ENCODE measurements at regions of chr17 and their contacts with region 1.

Region 1: DNA sequence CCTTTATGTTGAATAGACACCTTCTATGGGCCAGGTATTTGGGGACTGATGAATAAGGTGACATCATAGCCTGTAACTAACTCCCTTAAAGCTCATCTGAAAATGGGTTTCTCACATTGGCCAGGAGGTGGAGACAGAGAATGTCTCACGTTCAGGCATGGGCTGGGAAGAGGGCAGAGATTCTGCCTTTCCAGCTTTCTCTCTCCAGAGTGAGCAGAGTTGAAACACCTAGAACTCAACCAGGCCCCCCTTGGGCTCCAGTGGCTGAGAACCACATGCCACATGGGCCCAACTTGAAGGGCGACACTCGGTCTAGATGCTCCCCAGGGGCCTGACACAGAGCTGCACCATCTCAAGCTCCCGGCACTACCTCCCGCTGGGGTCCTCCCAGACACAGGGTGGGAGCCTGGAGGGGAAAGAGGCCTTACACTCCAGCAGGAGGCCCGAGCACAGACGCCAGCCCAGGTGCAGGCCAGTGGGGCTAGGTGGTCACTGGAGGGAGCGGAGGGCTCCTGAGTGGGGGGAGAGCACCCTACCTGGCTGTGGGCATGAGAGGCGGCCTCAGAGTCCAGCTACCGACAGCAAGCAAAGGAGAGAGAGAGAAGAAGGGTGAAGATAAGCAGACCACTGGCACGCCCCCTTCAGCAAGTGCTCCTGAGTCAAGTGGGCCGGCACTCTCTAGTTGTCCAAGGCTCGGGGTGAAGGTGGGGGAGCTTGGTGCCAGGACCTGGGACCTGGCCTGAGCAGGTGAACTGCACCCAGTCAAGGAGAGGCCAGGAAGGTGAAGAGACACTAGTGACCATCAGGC is 55.9 kb downstream of the MYO18A start:
- DNase-seq: peak; percentile 61
- ATAC-seq: peak; percentile 98
- H3K4me3 Mint-ChIP-seq: no peak overlapping the region
- H3K27ac Mint-ChIP-seq: no peak overlapping the region
- H3K4me1 Mint-ChIP-seq: peaks cover 3% of the 10 kb centered on the region
- H3K27me3 Mint-ChIP-seq: no peaks in the 10 kb centered on the region

Region 2: GRCh38 chr17:28937044-28937729 is 187.1 kb before region 1 on chr17:
- CTCF ChIA-PET with region 1: no interaction called
- POLR2A ChIA-PET with region 1: no interaction called
- intact Hi-C with region 1: no loop called
- DNase-seq: no peak
- ATAC-seq: no peak
- H3K4me3 Mint-ChIP-seq: no peak overlapping the region
- H3K27ac Mint-ChIP-seq: no peak overlapping the region
- H3K4me1 Mint-ChIP-seq: peaks cover 76% of the 10 kb centered on the region
- H3K27me3 Mint-ChIP-seq: no peaks in the 10 kb centered on the region

Region 3: DNA sequence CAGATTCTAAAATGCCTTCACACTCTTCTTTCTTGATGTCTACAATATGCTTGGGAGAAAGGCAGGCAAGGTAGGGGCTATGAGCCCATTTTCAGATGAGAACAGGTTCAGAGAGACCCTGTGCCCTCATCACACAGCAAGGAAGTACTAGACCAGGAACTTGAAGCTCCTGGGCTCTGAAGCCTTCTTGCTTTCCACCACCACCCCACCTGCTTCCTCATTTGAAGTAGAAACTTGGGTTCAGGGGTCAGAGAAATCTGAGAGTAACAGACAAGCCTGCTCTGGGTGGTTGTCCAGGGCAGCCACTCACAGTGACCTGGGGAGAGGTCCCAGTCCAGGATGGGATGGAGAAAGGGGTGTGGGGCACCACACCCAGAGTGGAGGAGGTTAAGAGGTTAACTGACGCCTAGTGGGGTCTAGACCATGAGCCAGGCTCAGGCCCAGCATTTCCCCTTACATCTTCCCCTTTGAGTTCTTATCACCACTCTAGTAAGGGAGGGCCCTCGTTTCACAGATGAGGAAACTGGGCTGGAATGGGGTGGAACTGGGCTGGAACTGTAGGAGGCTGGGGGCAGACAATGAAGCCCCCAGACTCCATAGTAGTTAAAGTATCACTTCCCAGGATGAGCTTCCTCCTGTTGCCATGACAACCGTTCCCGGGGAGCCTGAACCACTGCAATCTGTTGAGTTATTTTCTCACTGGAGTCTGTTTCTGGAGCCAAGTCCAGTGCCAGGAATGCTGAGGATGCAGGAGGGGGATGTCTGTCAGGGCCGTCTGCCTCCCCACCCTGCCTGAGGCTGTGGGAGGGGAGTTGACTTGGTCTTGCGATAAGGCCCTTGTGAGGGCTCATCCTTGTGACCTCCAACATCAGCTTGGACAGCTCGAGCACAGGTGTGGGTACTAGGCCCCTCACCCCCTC is 156.8 kb before region 1 on chr17:
- CTCF ChIA-PET with region 1: interaction called, 199 read pairs
- POLR2A ChIA-PET with region 1: no interaction called
- intact Hi-C with region 1: no loop called
- DNase-seq: no peak
- ATAC-seq: no peak
- H3K4me3 Mint-ChIP-seq: no peak overlapping the region
- H3K27ac Mint-ChIP-seq: no peak overlapping the region
- H3K4me1 Mint-ChIP-seq: no peaks in the 10 kb centered on the region
- H3K27me3 Mint-ChIP-seq: peaks cover 6% of the 10 kb centered on the region

Region 4: DNA sequence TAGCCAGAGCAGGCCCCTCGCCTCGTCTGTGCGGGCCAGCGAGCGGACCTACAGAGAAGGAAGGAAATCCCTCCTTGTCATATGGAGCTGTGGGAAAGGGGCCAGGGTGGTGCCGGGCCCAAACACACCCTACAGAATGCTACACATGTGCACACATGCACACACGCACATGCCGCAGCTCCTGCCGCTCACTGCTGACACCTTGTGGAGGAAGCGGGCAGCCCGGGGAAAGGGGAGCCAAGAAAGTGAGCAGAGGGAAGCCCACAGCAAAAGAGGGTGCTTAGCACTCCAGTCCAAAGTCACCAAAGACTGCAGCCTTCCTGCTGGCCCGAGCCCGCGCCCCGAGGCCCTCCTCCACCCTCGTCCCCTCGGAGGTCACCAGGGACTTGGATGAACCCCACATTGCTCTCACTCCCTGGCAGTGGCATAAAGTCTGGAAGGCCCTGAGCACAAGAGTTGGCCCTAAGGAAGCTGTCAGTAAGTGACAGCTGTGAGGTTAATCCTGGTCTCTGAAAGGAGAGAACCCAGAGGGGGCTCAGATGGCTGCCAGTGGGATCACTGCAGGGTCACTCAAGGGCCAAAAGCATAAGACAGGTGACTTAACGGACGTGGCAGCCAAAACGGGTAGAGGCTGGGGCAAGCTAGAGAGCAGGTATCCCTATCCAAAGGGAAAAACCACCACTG is 12.4 kb before region 1 on chr17:
- CTCF ChIA-PET with region 1: interaction called, 41 read pairs
- POLR2A ChIA-PET with region 1: no interaction called
- intact Hi-C with region 1: no loop called
- DNase-seq: peak; percentile 86
- ATAC-seq: peak; percentile 86
- H3K4me3 Mint-ChIP-seq: no peak overlapping the region
- H3K27ac Mint-ChIP-seq: no peak overlapping the region
- H3K4me1 Mint-ChIP-seq: peaks cover 3% of the 10 kb centered on the region
- H3K27me3 Mint-ChIP-seq: no peaks in the 10 kb centered on the region

Region 5: DNA sequence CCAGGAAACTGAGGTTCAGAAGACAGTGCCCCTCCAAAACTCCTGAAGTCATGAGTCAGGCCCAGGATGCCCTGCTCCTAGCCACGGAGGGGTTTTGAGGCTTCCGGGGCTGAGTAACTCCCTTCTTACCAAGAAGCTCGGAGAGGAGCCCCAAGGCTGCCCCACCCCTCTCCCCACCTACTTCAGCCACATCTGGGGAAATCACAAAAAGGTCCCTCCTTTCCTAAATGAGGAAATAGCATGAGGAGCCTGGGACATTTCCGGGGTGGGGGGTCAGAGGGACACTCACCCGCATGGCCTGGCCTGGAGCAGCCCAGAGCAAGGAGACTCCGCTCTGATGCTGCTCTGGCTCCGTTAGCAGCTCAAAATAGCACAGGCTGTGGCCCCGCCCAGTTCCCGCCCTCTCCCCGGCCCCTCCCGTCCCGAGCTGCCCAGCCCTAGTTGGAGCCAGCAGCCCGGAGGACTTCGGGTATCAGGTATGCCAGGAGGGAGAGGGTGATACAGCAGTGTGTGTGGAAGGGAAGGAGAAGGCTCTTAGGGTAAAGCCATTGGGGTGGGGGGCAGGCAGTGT is 15.8 kb after region 1 on chr17:
- CTCF ChIA-PET with region 1: interaction called, 129 read pairs
- POLR2A ChIA-PET with region 1: interaction called, 7 read pairs
- intact Hi-C with region 1: loop called (anchors 1 to 2 kb)
- DNase-seq: peak; percentile 92
- ATAC-seq: peak; percentile 60
- H3K4me3 Mint-ChIP-seq: peak overlapping the region; percentile 89
- H3K27ac Mint-ChIP-seq: peak overlapping the region; percentile 97
- H3K4me1 Mint-ChIP-seq: peaks cover 74% of the 10 kb centered on the region
- H3K27me3 Mint-ChIP-seq: no peaks in the 10 kb centered on the region

Region 6: DNA sequence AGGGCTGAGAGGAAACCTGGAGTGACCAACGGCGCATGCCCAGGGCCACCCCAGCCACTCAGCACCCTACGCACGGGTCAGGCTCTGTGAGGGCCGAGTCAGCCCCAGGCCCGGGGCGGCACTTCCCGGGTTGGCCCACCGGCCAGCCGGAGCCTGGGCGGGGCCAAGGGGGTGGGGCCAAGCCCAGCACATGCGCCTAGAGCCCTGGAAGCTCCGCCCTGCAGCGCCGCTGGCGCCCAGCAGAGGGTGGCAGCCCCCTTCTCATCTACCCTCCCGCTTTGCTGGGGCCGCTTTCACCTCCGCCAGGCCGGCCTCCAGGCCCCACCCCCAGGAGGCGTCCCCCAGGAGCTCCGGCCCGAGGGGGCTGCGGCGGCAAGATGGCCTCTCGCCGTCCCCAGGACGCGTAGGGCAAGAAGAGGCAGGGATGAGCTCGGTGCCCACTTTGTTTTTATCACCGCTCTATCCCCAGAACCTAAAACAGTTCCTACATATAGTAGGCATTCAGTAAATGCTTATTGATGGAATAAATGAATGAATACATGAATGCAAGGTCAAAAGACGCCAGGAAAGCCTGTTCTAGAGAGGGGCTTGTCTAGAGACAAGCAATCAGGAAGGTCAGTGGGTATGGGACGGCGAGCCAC is 24.6 kb after region 1 on chr17:
- CTCF ChIA-PET with region 1: interaction called, 88 read pairs
- POLR2A ChIA-PET with region 1: interaction called, 4 read pairs
- intact Hi-C with region 1: loop called in 1 of 2 experiments (anchors 1 kb)
- DNase-seq: peak; percentile 96
- ATAC-seq: peak; percentile 93
- H3K4me3 Mint-ChIP-seq: peak overlapping the region; percentile 56
- H3K27ac Mint-ChIP-seq: peak overlapping the region; percentile 90
- H3K4me1 Mint-ChIP-seq: peaks cover 48% of the 10 kb centered on the region
- H3K27me3 Mint-ChIP-seq: no peaks in the 10 kb centered on the region

Region 7: GRCh38 chr17:29180034-29180787 is 55.9 kb after region 1 on chr17 and contains the start of gene MYO18A:
- CTCF ChIA-PET with region 1: interaction called, 59 read pairs
- POLR2A ChIA-PET with region 1: no interaction called
- intact Hi-C with region 1: loop called in 1 of 2 experiments (anchors 1 kb)
- DNase-seq: peak; percentile 90
- ATAC-seq: peak; percentile 93
- H3K4me3 Mint-ChIP-seq: peak within 1 kb of the TSS; percentile 23
- H3K27ac Mint-ChIP-seq: no peak within 1 kb of the TSS
- H3K4me1 Mint-ChIP-seq: peaks cover 28% of the 10 kb centered on the region
- H3K27me3 Mint-ChIP-seq: no peaks in the 10 kb centered on the region
- total RNA-seq, gene MYO18A: 31.9 to 38.2 TPM

Region 8: GRCh38 chr17:29219378-29220047 is 95.2 kb after region 1 on chr17:
- CTCF ChIA-PET with region 1: interaction called, 30 read pairs
- POLR2A ChIA-PET with region 1: no interaction called
- intact Hi-C with region 1: loop called (anchors 1 kb)
- DNase-seq: peak; percentile 85
- ATAC-seq: peak; percentile 97
- H3K4me3 Mint-ChIP-seq: peak overlapping the region; percentile 17
- H3K27ac Mint-ChIP-seq: no peak overlapping the region
- H3K4me1 Mint-ChIP-seq: peaks cover 6% of the 10 kb centered on the region
- H3K27me3 Mint-ChIP-seq: no peaks in the 10 kb centered on the region

Measured in activated CD4-positive, alpha-beta T cell treated with anti-CD3 and anti-CD28 coated beads for 36 hours (primary cell).